CD8-positive, alpha-beta T cell (primary cell): ENCODE measurements at regions of chr7 and their contacts with region 1.

Region 1: GRCh38 chr7:36487756-36488336 is 98.2 kb downstream of the ANLN start:
- DNase-seq: peak in 5 of 9 experiments; percentile 9 to 77 (median 35)
- ATAC-seq: peak; percentile 89
- H3K4me3 ChIP-seq: no peak overlapping the region
- H3K4me3 Mint-ChIP-seq: no peak overlapping the region
- H3K27ac ChIP-seq: no peak overlapping the region
- H3K27ac Mint-ChIP-seq: no peak overlapping the region
- H3K4me1 ChIP-seq: no peaks in the 10 kb centered on the region
- H3K4me1 Mint-ChIP-seq: peaks cover 2% of the 10 kb centered on the region
- H3K27me3 ChIP-seq: no peaks in the 10 kb centered on the region
- H3K27me3 Mint-ChIP-seq: peaks cover 2% of the 10 kb centered on the region
- CTCF ChIP-seq: peak; percentile 87

Region 2: DNA sequence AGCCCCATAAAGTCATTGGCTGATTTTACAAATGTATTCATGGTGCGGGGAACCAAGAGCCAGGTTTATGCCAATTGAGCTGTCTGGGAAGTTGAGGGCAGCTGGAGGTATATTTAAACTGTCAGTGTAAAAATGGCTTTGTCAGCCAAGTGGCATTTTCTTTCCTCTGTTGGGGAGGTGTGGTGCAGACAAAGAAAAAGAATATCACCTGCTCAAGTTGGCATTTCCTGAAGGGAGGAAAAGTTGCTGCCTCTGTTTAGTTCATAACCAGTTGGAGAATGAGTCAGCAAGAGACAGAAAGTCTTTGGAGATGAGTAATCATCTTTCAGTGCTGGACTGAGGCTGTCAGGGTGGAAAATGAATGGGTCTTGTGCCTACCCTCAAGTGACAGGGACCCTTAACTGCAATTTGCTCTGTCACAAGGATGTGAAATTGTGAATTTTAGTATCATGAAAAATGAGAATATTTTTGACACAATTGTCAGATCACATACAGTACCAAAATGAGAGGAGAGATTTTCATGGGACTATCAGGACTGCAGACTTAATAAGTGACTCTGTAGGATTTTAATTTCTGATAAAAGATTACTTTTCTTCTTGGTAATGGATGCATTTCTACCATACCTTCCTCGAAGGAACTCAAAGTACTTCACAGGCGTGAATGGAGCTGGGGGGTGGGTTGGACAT is 39.2 kb after region 1 on chr7:
- CTCF ChIA-PET with region 1: interaction called, 11 read pairs
- POLR2A ChIA-PET with region 1: interaction called, 3 read pairs
- intact Hi-C with region 1: no loop called
- DNase-seq: no peak
- ATAC-seq: no peak
- H3K4me3 ChIP-seq: no peak overlapping the region
- H3K4me3 Mint-ChIP-seq: no peak overlapping the region
- H3K27ac ChIP-seq: no peak overlapping the region
- H3K27ac Mint-ChIP-seq: peak overlapping the region; percentile 9
- H3K4me1 ChIP-seq: no peaks in the 10 kb centered on the region
- H3K4me1 Mint-ChIP-seq: peaks cover 3% of the 10 kb centered on the region
- H3K27me3 ChIP-seq: no peaks in the 10 kb centered on the region
- H3K27me3 Mint-ChIP-seq: no peaks in the 10 kb centered on the region
- CTCF ChIP-seq: no peak

Region 3: GRCh38 chr7:36670585-36671431 is 183.0 kb after region 1 on chr7:
- CTCF ChIA-PET with region 1: interaction called, 91 read pairs
- POLR2A ChIA-PET with region 1: no interaction called
- intact Hi-C with region 1: loop called (anchors 1 kb)
- DNase-seq: peak; percentile 43 to 88 (median 72)
- ATAC-seq: peak; percentile 94
- H3K4me3 ChIP-seq: no peak overlapping the region
- H3K4me3 Mint-ChIP-seq: peak overlapping the region; percentile 16
- H3K27ac ChIP-seq: no peak overlapping the region
- H3K27ac Mint-ChIP-seq: peak overlapping the region; percentile 73
- H3K4me1 ChIP-seq: peaks cover 20% of the 10 kb centered on the region
- H3K4me1 Mint-ChIP-seq: peaks cover 39% of the 10 kb centered on the region
- H3K27me3 ChIP-seq: no peaks in the 10 kb centered on the region
- H3K27me3 Mint-ChIP-seq: no peaks in the 10 kb centered on the region
- CTCF ChIP-seq: peak; percentile 89

Region 4: DNA sequence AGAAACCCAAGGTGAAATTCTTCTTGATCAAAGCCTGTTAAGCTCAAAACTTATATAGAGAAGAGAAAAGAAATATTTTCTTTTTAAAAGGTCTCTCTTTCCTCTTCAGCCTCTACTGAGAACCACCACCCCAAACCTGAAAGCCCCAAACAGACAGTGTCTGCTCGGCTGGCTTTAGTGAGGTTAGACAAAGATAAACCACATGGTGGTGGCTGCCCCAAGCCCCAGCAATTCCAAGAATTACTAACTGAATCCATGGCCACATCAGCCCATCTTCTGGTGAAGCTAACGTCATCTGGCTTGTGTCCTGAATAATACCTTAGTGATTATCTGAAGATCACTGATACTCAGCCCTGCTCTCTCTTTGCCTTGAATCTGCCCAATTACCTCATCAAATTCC is 685.8 kb after region 1 on chr7:
- CTCF ChIA-PET with region 1: interaction called, 23 read pairs
- POLR2A ChIA-PET with region 1: no interaction called
- intact Hi-C with region 1: no loop called
- DNase-seq: no peak
- ATAC-seq: no peak
- H3K4me3 ChIP-seq: no peak overlapping the region
- H3K4me3 Mint-ChIP-seq: no peak overlapping the region
- H3K27ac ChIP-seq: no peak overlapping the region
- H3K27ac Mint-ChIP-seq: no peak overlapping the region
- H3K4me1 ChIP-seq: no peaks in the 10 kb centered on the region
- H3K4me1 Mint-ChIP-seq: no peaks in the 10 kb centered on the region
- H3K27me3 ChIP-seq: no peaks in the 10 kb centered on the region
- H3K27me3 Mint-ChIP-seq: no peaks in the 10 kb centered on the region
- CTCF ChIP-seq: no peak

Region 5: DNA sequence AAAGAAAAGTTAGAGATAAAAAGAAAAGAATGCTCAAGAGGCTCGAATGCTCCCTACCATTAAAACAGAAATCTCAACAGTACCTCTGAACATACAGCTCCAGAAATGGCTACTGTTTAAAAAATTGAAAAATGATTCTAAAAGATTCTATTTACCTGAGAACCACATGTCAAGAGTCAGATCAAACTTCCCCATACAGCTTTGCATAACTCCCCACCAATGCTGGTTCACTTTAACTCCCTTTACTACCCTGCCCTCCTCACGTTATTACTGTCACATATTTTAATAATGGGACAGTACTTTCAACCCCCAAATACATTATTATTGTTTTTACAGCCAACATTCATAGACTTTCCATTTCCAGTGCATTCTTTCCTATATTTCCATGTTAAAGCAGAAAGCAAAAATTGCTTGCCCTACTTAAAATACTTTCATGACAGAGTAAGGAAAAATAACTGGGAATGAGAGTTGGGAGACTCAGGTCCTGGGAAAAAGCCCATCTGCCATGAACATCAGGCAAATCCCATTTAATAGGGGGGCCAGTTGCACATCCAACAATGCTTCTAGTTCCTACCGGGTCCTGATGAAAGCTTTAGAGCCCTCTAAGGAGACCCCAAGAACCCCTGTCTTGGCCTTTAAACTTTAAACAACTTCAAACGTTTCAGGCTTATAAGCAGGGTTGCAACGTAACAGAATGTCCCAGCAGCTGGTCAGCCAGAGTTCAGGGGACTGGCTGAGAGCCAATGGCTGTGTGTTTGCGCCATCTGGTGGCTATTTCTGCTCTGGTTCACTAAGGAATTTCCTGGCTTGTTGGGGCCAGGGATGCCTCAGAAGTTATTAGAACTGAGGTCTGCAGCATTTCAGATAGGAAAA is 713.4 kb after region 1 on chr7:
- CTCF ChIA-PET with region 1: interaction called, 128 read pairs
- POLR2A ChIA-PET with region 1: interaction called, 3 read pairs
- intact Hi-C with region 1: loop called (anchors 1 kb)
- DNase-seq: peak; percentile 6 to 65 (median 48)
- ATAC-seq: no peak
- H3K4me3 ChIP-seq: no peak overlapping the region
- H3K4me3 Mint-ChIP-seq: no peak overlapping the region
- H3K27ac ChIP-seq: no peak overlapping the region
- H3K27ac Mint-ChIP-seq: peak overlapping the region; percentile 34
- H3K4me1 ChIP-seq: no peaks in the 10 kb centered on the region
- H3K4me1 Mint-ChIP-seq: peaks cover 4% of the 10 kb centered on the region
- H3K27me3 ChIP-seq: no peaks in the 10 kb centered on the region
- H3K27me3 Mint-ChIP-seq: no peaks in the 10 kb centered on the region
- CTCF ChIP-seq: peak; percentile 45

Region 6: DNA sequence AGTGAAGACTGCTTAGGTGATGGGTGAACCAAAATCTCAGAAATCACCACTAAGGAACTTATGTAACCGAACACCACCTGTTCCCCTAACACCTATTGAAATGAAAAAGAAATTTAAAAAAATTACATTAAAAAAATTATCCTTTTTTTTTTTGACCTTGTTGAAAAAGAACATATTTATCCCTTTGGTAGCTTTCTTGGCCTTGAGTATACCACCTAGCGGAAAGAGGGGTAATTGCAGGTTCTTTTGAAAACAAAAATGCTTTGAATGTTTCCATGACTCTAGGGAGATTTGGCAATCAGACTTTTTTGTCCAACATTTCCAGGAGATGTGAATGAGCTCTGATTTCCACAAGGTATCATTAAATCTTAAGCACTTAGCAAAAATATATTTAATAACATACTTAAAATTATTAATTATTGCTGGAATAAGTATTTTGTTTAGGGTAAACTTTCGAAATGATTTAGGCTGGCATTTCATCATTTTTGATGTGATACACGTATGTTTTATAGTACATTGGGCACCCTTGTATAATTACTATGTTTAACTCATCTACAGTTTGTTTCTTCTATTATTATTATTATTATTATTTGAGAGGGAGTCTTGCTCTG is 1007.8 kb after region 1 on chr7:
- CTCF ChIA-PET with region 1: no interaction called
- POLR2A ChIA-PET with region 1: no interaction called
- intact Hi-C with region 1: loop called (anchors 5 to 10 kb)
- DNase-seq: peak in 2 of 9 experiments; percentile 42 to 53
- ATAC-seq: peak; percentile 56
- H3K4me3 ChIP-seq: no peak overlapping the region
- H3K4me3 Mint-ChIP-seq: no peak overlapping the region
- H3K27ac ChIP-seq: no peak overlapping the region
- H3K27ac Mint-ChIP-seq: no peak overlapping the region
- H3K4me1 ChIP-seq: no peaks in the 10 kb centered on the region
- H3K4me1 Mint-ChIP-seq: no peaks in the 10 kb centered on the region
- H3K27me3 ChIP-seq: peaks cover 0 to 2% of the 10 kb centered on the region in 2 experiments
- H3K27me3 Mint-ChIP-seq: no peaks in the 10 kb centered on the region
- CTCF ChIP-seq: peak; percentile 93

Region 7: GRCh38 chr7:37833107-37833817 is 1345.4 kb after region 1 on chr7:
- CTCF ChIA-PET with region 1: no interaction called
- POLR2A ChIA-PET with region 1: no interaction called
- intact Hi-C with region 1: loop called in 1 of 2 experiments (anchors 10 kb)
- DNase-seq: peak in 7 of 9 experiments; percentile 18 to 72 (median 41)
- ATAC-seq: peak; percentile 73
- H3K4me3 ChIP-seq: peak overlapping the region; percentile 39 to 46
- H3K4me3 Mint-ChIP-seq: peak overlapping the region; percentile 83
- H3K27ac ChIP-seq: no peak overlapping the region
- H3K27ac Mint-ChIP-seq: peak overlapping the region; percentile 38
- H3K4me1 ChIP-seq: no peaks in the 10 kb centered on the region
- H3K4me1 Mint-ChIP-seq: peaks cover 8% of the 10 kb centered on the region
- H3K27me3 ChIP-seq: no peaks in the 10 kb centered on the region
- H3K27me3 Mint-ChIP-seq: peaks cover 7% of the 10 kb centered on the region
- CTCF ChIP-seq: peak; percentile 72